Brain microvascular endothelial cell (primary cell): ENCODE measurements at regions of chr14 and their contacts with region 1.

Region 1: GRCh38 chr14:68816262-68816942 is 23.5 kb upstream of the ZFP36L1 start:
- DNase-seq: peak; percentile 76
- H3K4me3 ChIP-seq: peak overlapping the region; percentile 42
- H3K27ac ChIP-seq: peak overlapping the region; percentile 90
- H3K27me3 ChIP-seq: no peaks in the 10 kb centered on the region
- CTCF ChIP-seq: peak; percentile 90

Region 2: GRCh38 chr14:67943947-67944346 is 872.5 kb before region 1 on chr14:
- in situ Hi-C with region 1: loop called (anchors 25 kb)
- DNase-seq: peak; percentile 89
- H3K4me3 ChIP-seq: no peak overlapping the region
- H3K27ac ChIP-seq: no peak overlapping the region
- H3K27me3 ChIP-seq: no peaks in the 10 kb centered on the region
- CTCF ChIP-seq: peak; percentile 66

Region 3: GRCh38 chr14:69226178-69226577 is 409.8 kb after region 1 on chr14:
- in situ Hi-C with region 1: no loop called
- DNase-seq: no peak
- H3K4me3 ChIP-seq: no peak overlapping the region
- H3K27ac ChIP-seq: no peak overlapping the region
- H3K27me3 ChIP-seq: no peaks in the 10 kb centered on the region
- CTCF ChIP-seq: no peak

Region 4: DNA sequence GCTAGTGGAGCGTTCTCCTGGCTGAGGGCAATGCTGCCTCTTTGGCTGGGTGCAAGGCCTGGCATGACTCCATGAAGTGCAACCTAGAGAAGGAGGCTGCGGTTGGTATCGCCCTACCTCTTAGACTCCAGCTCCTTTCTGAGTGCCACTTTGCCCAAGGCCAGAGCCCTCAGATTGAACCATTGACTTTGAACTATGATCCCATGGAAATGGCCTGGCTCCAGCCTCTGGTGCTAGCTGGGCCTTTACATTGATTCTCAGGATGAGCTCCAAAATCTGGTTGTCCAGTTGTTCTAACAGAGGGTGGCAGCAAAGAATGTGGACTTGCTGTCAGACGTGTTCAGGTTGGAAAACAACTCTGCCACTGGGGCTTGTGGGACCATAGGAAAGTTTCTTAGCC is 1046.7 kb after region 1 on chr14:
- in situ Hi-C with region 1: no loop called
- DNase-seq: no peak
- H3K4me3 ChIP-seq: no peak overlapping the region
- H3K27ac ChIP-seq: no peak overlapping the region
- H3K27me3 ChIP-seq: no peaks in the 10 kb centered on the region
- CTCF ChIP-seq: peak; percentile 18